Dendritic cell treated with granulocyte-macrophage colony-stimulating factor and Interleukin-4, amounts not matched to agents 40 ng/mL and 50 ng/mL, for 4 days (primary cell): ENCODE measurements at regions of chr1 and their contacts with region 1.

Region 1: GRCh38 chr1:207885129-207886032 is 25.5 kb downstream of the CD34 start:
- H3K4me3 Mint-ChIP-seq: no peak overlapping the region
- H3K27ac Mint-ChIP-seq: peak overlapping the region; percentile 30
- H3K4me1 Mint-ChIP-seq: peaks cover 64% of the 10 kb centered on the region
- H3K27me3 Mint-ChIP-seq: peaks cover 10% of the 10 kb centered on the region

Region 2: GRCh38 chr1:207997486-207998268 is 112.3 kb after region 1 on chr1:
- intact Hi-C with region 1: loop called (anchors 1 kb)
- H3K4me3 Mint-ChIP-seq: no peak overlapping the region
- H3K27ac Mint-ChIP-seq: no peak overlapping the region
- H3K4me1 Mint-ChIP-seq: peaks cover 10% of the 10 kb centered on the region
- H3K27me3 Mint-ChIP-seq: peaks cover 4% of the 10 kb centered on the region